Colonic mucosa (tissue), 4 donors: ENCODE measurements at regions of chr14 and their contacts with region 1.

Region 1: GRCh38 chr14:73825551-73826188 is 26.0 kb upstream of the PTGR2 start:
- DNase-seq: peak; percentile 94
- H3K4me3 ChIP-seq: no peak overlapping the region
- H3K27ac ChIP-seq: no peak overlapping the region
- H3K4me1 ChIP-seq: no peaks in the 10 kb centered on the region
- H3K27me3 ChIP-seq: no peaks in the 10 kb centered on the region
- CTCF ChIP-seq: peak; percentile 97

Region 2: GRCh38 chr14:73728717-73729330 is 96.8 kb before region 1 on chr14:
- intact Hi-C with region 1: loop called (anchors 2 kb)
- DNase-seq: peak; percentile 97
- H3K4me3 ChIP-seq: no peak overlapping the region
- H3K27ac ChIP-seq: peak overlapping the region; percentile 51
- H3K4me1 ChIP-seq: peaks cover 13% of the 10 kb centered on the region
- H3K27me3 ChIP-seq: no peaks in the 10 kb centered on the region
- CTCF ChIP-seq: peak; percentile 94